Right cardiac atrium (tissue), 5 donors: ENCODE measurements at regions of chr13 and their contacts with region 1.

Region 1: DNA sequence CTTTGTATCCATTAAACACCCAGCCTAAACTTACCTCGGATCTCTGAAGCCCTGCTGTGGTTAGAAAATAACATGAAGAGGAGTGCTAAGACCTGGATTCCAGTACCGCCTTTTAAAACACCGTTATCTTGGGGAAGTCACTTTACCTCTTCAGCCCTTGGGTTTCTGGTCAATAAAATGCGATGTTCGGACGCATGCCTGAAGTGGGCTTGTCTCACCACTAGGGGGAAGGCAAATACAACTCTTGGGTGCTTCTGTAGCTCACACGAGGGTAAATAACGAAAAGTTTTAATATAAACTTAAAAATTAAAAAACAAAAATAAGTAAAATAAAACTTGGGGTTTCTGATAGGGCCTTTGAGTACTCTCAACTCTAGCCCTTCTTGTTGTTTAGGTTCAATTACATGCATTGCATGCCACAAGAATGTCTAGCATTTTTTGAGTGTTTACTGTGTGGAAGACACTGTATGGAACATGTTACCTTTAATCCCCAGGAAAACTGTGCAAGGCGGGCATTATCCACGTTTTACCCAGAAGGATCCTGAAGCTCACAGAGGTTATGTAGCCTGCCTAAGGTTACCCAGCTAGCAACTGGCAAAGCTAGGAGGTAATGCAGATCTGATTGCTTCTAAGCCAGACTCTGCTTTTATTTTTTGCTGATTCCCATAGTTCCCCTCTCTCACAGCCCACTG is 240.4 kb downstream of the LMO7 start:
- DNase-seq: peak in 2 of 3 donors; percentile 28 to 74
- ATAC-seq: peak; percentile 87 to 88
- H3K4me3 ChIP-seq: no peak overlapping the region
- H3K27ac ChIP-seq: no peak overlapping the region
- H3K4me1 ChIP-seq: peaks cover 1% of the 10 kb centered on the region
- H3K27me3 ChIP-seq: no peaks in the 10 kb centered on the region

Region 2: GRCh38 chr13:75934889-75935288 is 58.4 kb after region 1 on chr13:
- intact Hi-C with region 1: no loop called
- DNase-seq: no peak
- ATAC-seq: no peak
- H3K4me3 ChIP-seq: no peak overlapping the region
- H3K27ac ChIP-seq: no peak overlapping the region
- H3K4me1 ChIP-seq: no peaks in the 10 kb centered on the region
- H3K27me3 ChIP-seq: no peaks in the 10 kb centered on the region

Region 3: GRCh38 chr13:76016799-76017400 is 140.4 kb after region 1 on chr13:
- intact Hi-C with region 1: loop called in 2 of 4 experiments (anchors 5 to 10 kb)
- DNase-seq: no peak
- ATAC-seq: peak in 1 of 2 donors; percentile 45
- H3K4me3 ChIP-seq: no peak overlapping the region
- H3K27ac ChIP-seq: no peak overlapping the region
- H3K4me1 ChIP-seq: peaks cover 5% of the 10 kb centered on the region
- H3K27me3 ChIP-seq: no peaks in the 10 kb centered on the region

Region 4: GRCh38 chr13:76123548-76123947 is 247.0 kb after region 1 on chr13:
- intact Hi-C with region 1: no loop called
- DNase-seq: no peak
- ATAC-seq: no peak
- H3K4me3 ChIP-seq: no peak overlapping the region
- H3K27ac ChIP-seq: no peak overlapping the region
- H3K4me1 ChIP-seq: no peaks in the 10 kb centered on the region
- H3K27me3 ChIP-seq: no peaks in the 10 kb centered on the region

Region 5: DNA sequence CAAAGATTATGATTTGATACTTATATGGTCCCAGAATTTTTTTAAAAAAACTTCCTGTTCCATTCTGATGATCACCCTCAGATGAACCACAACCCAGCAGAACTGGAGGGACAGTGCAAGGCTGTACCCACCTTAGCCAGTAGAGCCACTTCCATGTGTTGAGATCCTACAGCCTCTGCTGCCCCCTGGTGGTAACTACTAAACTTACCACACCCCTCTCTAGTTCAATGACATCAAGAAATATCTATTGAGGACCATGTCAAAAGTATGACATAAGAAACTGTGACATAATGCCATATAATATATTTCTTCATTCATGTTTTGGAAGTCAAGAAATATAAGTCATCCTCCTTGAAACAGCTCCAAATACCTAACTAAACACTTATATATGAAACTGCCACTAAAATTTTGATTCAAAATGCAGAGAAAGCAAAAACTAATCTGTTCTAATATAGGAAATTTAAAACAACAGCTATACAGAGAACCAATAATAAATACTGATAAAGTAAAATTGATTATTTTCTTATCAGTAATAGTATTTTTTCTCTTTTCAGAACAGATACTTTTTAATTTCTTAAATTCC is 597.1 kb after region 1 on chr13:
- intact Hi-C with region 1: loop called (anchors 2 to 5 kb)
- DNase-seq: peak; percentile 58 to 68 (median 64)
- ATAC-seq: peak; percentile 94 to 97
- H3K4me3 ChIP-seq: no peak overlapping the region
- H3K27ac ChIP-seq: no peak overlapping the region
- H3K4me1 ChIP-seq: no peaks in the 10 kb centered on the region
- H3K27me3 ChIP-seq: no peaks in the 10 kb centered on the region

Region 6: GRCh38 chr13:76903544-76904162 is 1027.1 kb after region 1 on chr13:
- intact Hi-C with region 1: loop called in 2 of 4 experiments (anchors 5 kb)
- DNase-seq: peak; percentile 33 to 74 (median 56)
- ATAC-seq: peak; percentile 83 to 84
- H3K4me3 ChIP-seq: no peak overlapping the region
- H3K27ac ChIP-seq: no peak overlapping the region
- H3K4me1 ChIP-seq: no peaks in the 10 kb centered on the region
- H3K27me3 ChIP-seq: no peaks in the 10 kb centered on the region

Region 7: DNA sequence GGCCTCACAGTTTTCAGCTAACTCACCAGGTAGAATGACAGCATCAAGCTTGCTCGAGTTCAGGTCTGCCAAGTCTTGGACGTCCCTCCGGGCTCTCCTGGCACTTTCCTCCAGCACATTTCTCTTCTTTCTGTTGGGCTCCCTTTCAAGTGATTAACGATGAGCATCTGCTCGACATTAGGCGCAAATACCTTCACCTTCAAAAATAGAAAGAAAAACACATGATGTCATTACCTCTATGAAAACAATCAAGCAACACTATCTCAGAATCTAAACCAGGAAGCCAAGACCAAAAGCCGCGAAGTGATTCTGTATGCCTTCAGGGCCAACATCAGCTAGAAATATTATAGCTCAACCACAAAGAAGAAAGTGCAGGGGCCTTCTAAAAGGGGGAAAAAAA is 1100.0 kb after region 1 on chr13:
- intact Hi-C with region 1: loop called in 2 of 4 experiments (anchors 10 kb)
- DNase-seq: no peak
- ATAC-seq: no peak
- H3K4me3 ChIP-seq: no peak overlapping the region
- H3K27ac ChIP-seq: no peak overlapping the region
- H3K4me1 ChIP-seq: peaks cover 4% of the 10 kb centered on the region
- H3K27me3 ChIP-seq: no peaks in the 10 kb centered on the region